Left cardiac atrium (tissue), 4 donors: ENCODE measurements at regions of chr9 and their contacts with region 1.

Region 1: GRCh38 chr9:15510789-15511575 is at the start of gene PSIP1:
- DNase-seq: peak; percentile 80
- ATAC-seq: peak; percentile 92 to 94
- total RNA-seq, gene PSIP1: 23.6 to 29.1 TPM

Region 2: DNA sequence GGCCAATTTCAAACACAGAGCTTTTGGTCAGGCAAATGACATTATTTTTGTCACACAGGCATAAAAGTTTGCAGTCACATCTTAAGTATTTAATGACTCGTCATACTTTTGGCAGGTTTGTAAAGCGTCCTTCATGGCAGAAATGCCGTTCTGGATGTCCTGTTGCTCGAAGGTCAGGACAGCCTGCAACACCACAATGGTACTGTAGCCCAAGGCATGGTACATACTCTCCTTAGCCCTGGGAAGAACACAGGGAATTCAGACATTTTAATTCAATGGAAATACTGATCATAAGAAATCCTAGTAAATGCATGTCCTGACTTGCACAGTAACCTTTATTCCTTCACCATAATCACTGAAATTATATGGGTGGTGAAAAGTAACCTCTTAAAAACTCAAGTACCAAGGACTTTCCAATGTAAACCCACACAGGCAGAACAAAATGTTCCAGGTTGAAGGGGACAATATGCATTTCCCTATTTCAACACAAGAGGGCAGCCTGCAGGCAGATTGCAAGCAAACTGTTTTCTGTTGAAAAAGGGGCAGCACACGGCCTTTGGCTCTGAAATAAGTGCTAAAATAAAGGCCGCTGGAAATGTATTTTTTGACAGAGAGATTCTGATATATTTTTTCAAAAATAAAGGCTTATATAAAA is 299.7 kb before region 1 on chr9:
- intact Hi-C with region 1: no loop called
- DNase-seq: peak; percentile 40
- ATAC-seq: peak; percentile 53 to 63

Region 3: DNA sequence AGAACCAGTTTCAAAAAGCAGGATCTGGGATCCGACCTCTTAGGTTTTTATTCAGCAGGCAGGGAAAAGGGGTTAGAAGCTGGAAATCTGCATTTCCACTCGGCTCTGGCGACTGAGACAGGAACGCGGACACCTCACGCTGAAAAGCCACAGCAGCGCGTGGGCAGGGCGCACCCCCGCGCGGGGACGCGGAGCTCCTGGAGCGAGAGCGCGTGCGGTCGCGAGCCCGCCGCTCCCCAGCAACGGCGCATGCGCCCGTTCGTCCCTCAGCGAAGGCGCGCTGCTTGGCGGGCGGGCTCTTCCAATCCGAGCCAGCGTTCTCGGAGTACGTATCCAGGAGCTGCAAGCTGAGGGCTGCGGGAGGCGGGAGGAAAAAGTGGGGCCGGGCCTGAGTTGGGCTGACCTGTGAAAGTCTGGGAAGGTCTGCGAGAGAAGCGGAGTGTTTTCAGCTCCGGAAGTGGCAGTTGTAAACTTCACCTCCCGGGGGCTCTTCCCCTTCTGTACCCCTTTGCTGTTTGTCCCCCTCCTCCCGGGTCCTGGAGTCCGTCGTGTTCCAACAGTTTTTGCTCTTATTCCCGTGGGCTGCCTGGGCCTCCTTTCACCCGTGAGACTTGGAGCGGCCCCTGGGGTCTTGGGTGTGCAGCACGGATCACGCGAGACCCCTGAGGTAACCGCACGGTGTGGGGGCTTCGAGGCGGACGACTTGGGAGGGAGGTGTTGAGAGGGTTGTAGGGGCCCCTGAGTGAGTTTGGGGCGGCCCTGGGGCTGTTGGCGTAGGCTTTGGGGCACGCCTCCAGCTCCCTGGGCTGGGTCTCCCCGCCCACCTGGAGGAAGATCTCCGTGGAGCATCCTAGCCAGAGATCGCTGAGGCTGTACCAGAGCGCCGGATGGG is 41.9 kb after region 1 on chr9 and contains the start of gene CCDC171:
- intact Hi-C with region 1: loop called in 1 of 2 experiments (anchors 2 kb)
- DNase-seq: peak; percentile 95
- ATAC-seq: peak; percentile 99
- total RNA-seq, gene CCDC171: 1.4 to 1.8 TPM

Region 4: DNA sequence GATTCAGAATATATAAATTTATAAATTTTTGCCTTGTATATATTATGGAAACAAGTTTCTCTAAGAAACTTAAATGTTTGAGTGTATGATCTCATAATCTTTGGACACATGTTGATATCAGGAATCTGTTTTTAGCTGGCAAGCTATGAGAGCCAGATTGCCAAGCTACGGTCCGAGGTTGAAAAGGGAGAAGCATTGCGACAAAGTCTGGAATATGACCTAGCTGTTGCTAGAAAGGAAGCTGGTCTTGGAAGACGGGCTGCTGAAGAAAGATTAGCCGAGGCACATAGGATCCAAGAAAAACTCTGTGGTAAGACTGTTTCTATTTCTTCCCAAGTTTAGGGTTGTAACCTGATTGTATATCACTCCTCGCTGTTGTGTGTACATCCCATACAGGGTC is 67.7 kb after region 1 on chr9:
- intact Hi-C with region 1: no loop called
- DNase-seq: peak; percentile 29
- ATAC-seq: peak; percentile 47 to 70

Region 5: GRCh38 chr9:15606643-15607472 is 95.9 kb after region 1 on chr9:
- intact Hi-C with region 1: loop called in 1 of 2 experiments (anchors 10 kb)
- DNase-seq: no peak
- ATAC-seq: no peak

Region 6: GRCh38 chr9:17236147-17236546 is 1725.2 kb after region 1 on chr9:
- intact Hi-C with region 1: no loop called
- DNase-seq: no peak
- ATAC-seq: no peak